Prostate gland (tissue), 2 donors: ENCODE measurements at regions of chr9 and their contacts with region 1.

Region 1: DNA sequence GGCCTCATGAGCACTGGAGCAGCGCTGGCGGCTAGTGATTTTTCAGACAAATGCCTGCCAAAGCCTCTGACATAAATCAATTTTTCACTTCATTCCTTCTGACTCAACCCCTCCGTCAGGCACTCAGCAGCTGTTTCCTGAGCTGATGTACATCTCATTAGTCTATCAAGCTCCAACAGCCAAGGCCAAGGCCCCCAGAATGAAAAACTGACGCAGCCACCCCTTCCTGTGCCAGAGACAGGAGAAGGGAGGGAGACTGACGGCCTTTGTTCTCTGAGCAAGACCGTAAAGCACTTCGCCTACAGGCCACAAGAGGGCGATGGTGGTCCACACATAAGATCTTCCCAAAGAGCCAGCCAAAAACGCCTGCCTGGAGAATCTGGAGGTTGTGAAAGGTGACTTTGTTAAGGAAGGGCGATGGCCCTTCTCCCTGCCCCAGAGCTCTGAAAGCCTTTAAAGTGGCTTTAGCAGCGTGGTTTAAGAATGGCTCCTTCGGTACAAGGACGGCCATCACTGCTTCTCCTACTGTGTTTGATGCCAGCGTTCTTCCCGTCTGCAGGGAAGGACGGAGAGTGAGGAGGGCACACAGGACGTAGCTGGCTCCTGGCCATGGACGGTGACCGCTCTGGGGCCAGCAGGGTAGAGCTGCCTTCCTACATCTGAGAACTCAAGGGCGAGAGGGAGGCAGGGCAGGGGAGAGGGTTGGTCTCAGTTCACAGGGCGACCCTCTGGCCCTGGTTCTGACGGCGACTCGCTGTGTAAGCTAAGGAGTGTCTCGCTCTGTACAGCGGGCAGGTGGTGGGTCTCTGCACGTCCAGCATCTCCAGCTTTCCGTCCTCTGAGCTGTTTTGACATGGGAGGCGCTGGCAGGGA is 37.0 kb downstream of the ALG2 start:
- DNase-seq: peak; percentile 82
- H3K4me3 ChIP-seq: no peak overlapping the region
- H3K27ac ChIP-seq: no peak overlapping the region
- H3K4me1 ChIP-seq: no peaks in the 10 kb centered on the region
- H3K27me3 ChIP-seq: no peaks in the 10 kb centered on the region
- CTCF ChIP-seq: peak; percentile 83 to 92 (median 87)
- POLR2A ChIP-seq: no peak

Region 2: GRCh38 chr9:99221621-99222415 is 37.1 kb after region 1 on chr9 and contains the starts of genes ALG2 and SEC61B:
- intact Hi-C with region 1: loop called (anchors 5 kb)
- DNase-seq: peak; percentile 89
- H3K4me3 ChIP-seq: peak within 1 kb of the TSS; percentile 91 to 93
- H3K27ac ChIP-seq: peak within 1 kb of the TSS; percentile 87 to 91
- H3K4me1 ChIP-seq: peaks cover 2% of the 10 kb centered on the region
- H3K27me3 ChIP-seq: no peaks in the 10 kb centered on the region
- CTCF ChIP-seq: peak in 2 of 4 experiments; percentile 19 to 21
- POLR2A ChIP-seq: peak; percentile 82
- total RNA-seq, gene ALG2: 47.0 to 64.4 TPM
- total RNA-seq, gene SEC61B: 67.7 to 126 TPM

Region 3: GRCh38 chr9:100222674-100223073 is 1038.0 kb after region 1 on chr9:
- intact Hi-C with region 1: loop called (anchors 5 kb)
- DNase-seq: no peak
- H3K4me3 ChIP-seq: no peak overlapping the region
- H3K27ac ChIP-seq: no peak overlapping the region
- H3K4me1 ChIP-seq: no peaks in the 10 kb centered on the region
- H3K27me3 ChIP-seq: no peaks in the 10 kb centered on the region
- CTCF ChIP-seq: peak in 1 of 4 experiments; percentile 44
- POLR2A ChIP-seq: no peak

Region 4: DNA sequence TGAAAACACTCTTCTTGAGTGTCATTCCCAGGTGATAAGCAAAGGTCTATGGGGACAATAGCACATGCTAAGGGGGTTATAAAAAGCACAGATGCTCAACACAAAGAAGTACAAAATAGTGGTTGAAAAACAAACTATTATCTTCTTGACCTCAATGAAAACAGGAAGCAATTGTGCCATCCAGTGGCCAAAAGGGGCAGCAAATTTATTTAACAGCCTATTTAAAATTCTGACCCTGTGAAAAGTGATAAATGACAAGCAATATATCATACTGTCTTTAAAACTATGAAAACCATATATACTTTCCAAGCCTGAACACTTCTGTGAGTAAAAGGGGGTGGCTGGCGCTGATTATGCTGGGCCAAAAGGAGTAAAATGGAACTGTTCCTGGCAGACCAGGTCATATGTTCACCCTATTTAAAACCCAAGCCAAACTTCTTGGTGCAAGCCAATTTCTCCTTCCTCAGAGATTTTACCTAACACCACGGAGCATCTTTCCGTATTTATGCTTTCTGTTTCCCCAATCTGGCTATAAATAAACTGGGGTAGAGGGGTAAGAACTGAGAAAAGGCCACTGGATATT is 1138.3 kb after region 1 on chr9:
- intact Hi-C with region 1: loop called (anchors 10 kb)
- DNase-seq: peak; percentile 20
- H3K4me3 ChIP-seq: no peak overlapping the region
- H3K27ac ChIP-seq: no peak overlapping the region
- H3K4me1 ChIP-seq: no peaks in the 10 kb centered on the region
- H3K27me3 ChIP-seq: no peaks in the 10 kb centered on the region
- CTCF ChIP-seq: peak; percentile 13 to 69 (median 62)
- POLR2A ChIP-seq: no peak